ENCODE measurements at regions of chr12 and their contacts with region 1.

Region 1: GRCh38 chr12:105862163-105862821 is 276.5 kb downstream of the NUAK1 start:
- DNase-seq: peak; percentile 65

Region 2: GRCh38 chr12:105843986-105844760 is 18.1 kb before region 1 on chr12:
- intact Hi-C with region 1: loop called in 1 of 2 experiments (anchors 1 kb)
- DNase-seq: no peak

Region 3: GRCh38 chr12:105954951-105955931 is 92.9 kb after region 1 on chr12:
- intact Hi-C with region 1: no loop called
- DNase-seq: no peak

Measured in posterior vena cava (tissue), 2 donors.